Vagina (tissue), 2 donors: ENCODE measurements at regions of chr3 and their contacts with region 1.

Region 1: DNA sequence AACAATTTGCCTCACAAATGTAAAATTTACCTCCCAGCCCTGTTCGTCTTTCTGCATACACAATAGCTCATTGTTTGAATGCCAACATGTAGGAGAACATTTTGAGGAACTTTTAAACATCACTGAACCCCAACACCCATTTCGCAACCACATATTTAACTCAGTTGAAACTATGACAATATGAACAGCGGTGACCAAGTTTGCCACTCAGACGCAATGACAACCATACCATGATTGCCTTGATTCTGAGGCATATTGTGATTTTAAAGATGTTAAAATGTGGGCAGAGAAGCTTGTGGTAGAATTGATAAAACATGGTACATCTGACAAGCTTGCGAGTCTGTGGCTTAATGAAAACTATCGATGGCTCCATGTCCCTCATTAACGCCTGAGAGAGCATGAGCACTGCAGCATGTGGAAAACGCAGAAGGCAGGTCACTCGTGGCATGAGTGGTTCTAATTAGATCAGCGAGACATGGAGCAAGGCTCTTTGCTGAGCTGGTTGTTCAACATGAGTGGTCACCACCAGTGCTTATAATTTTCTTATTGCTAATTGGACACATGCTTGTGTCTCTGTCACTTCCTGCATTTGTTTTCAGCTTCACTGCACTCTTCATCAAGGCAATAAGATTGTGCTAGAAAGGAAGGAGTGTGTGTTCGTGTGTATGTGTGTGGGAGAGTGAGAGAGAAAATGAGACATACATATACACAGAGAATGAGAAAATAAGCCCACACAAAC is 116.8 kb downstream of the CHST2 start:
- DNase-seq: peak in 1 of 2 donors; percentile 34
- H3K4me3 ChIP-seq: no peak overlapping the region
- H3K27ac ChIP-seq: no peak overlapping the region
- H3K4me1 ChIP-seq: peaks cover 7% of the 10 kb centered on the region
- H3K27me3 ChIP-seq: no peaks in the 10 kb centered on the region
- CTCF ChIP-seq: no peak
- POLR2A ChIP-seq: no peak

Region 2: DNA sequence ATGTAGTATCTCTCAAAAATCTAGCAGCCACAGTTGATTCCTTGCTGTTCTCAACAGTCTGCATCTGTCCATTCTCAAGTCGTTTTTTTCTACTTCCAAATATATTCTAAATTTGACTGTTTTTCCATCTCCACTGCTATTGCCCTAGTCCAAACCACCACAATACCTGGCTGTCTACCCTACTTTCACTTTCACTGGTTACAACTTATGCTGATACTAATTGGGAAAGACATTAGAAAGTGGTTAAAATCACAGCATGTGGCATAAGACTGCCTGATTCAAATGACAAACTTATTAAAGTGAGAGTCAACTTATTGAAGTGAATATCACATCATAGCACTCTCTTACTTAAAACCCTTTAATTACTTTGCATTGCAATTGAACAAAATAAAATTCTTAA is 44.2 kb before region 1 on chr3:
- intact Hi-C with region 1: no loop called
- DNase-seq: no peak
- H3K4me3 ChIP-seq: no peak overlapping the region
- H3K27ac ChIP-seq: no peak overlapping the region
- H3K4me1 ChIP-seq: no peaks in the 10 kb centered on the region
- H3K27me3 ChIP-seq: no peaks in the 10 kb centered on the region
- CTCF ChIP-seq: no peak
- POLR2A ChIP-seq: no peak

Region 3: DNA sequence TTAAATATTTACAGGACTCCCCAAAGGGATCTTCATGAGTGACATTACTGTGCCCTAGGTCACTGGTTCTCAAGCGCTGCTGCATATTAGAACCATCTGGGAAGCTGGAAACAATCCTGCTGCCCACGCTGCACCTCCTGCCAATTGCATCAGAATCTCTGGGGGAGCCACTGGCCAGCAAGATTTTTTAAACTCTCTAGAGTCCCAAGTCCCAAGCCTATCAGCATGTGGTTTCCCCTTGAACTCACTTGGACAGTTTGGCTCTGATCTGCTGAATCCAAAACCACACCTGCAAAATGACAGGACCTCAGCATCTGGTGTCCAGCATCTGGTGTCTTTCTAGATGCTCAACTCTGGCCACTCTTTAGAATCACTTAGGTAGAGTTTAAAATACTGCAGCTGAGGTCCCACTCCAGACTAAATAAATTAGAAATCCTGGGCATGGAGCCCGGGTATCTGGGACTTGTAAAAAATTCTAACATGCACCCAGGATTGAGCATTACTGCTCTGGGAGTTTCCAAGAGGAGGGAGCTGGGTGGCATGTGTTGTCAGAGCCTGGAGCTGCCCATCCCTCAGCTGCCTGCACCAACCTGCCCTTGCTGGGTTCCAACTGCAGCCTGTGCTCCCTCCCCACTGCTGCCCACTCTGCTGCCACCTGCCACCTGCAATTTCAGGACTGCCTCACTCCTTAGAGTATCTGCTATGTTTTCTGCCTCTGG is 300.6 kb after region 1 on chr3:
- intact Hi-C with region 1: loop called (anchors 2 kb)
- DNase-seq: no peak
- H3K4me3 ChIP-seq: no peak overlapping the region
- H3K27ac ChIP-seq: peak overlapping the region; percentile 11
- H3K4me1 ChIP-seq: peaks cover 39% of the 10 kb centered on the region
- H3K27me3 ChIP-seq: no peaks in the 10 kb centered on the region
- CTCF ChIP-seq: no peak
- POLR2A ChIP-seq: no peak

Region 4: DNA sequence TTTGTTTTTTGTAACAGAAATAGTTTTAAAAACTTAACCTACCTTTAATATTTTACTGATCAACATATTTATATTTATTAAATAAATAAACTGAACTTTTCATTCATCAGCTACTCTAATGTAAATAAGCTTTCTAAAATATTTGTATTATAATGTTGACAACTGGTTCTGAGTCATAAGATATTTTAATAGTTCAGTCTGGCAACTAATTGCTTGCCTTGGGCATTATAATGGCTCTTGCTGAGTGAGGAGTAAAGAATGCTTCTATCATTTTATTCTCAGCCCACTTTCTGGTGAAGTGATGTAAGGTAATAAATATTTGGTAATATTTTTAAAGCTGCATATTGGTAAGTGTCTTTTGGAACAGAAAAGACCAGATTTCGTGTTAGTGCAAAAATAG is 816.7 kb after region 1 on chr3:
- intact Hi-C with region 1: no loop called
- DNase-seq: no peak
- H3K4me3 ChIP-seq: no peak overlapping the region
- H3K27ac ChIP-seq: no peak overlapping the region
- H3K4me1 ChIP-seq: no peaks in the 10 kb centered on the region
- H3K27me3 ChIP-seq: no peaks in the 10 kb centered on the region
- CTCF ChIP-seq: no peak
- POLR2A ChIP-seq: no peak